Caco-2 (cell line): ENCODE measurements at regions of chr7 and their contacts with region 1.

Region 1: DNA sequence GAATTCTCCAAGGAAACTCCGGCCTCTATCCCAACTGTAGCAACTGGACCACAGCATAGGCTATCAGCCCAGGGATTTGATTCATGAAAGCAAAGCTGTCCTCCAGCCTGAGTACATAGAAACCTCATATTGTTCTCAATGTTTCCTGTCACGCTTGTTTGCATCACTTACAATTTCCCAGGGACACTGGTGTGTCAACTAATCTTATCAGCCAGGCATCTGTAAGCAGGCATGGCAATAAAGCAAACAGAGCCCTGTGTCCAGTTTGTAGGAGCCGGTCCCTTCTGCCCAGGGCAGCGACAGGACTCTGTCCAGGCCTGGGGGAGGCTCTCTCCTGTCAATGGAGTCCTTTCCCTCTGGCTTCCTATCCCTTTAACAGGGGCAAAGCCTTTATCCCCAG is 23.0 kb upstream of the CDHR3 start:
- DNase-seq: peak; percentile 46 to 55
- H3K4me3 ChIP-seq: no peak overlapping the region
- H3K4me3 Mint-ChIP-seq: no peak overlapping the region
- H3K27ac Mint-ChIP-seq: peak overlapping the region; percentile 48
- H3K4me1 ChIP-seq: peaks cover 7% of the 10 kb centered on the region; the same call in 1 of the 2 replicates
- H3K4me1 Mint-ChIP-seq: peaks cover 14% of the 10 kb centered on the region
- H3K27me3 ChIP-seq: no peaks in the 10 kb centered on the region
- H3K27me3 Mint-ChIP-seq: no peaks in the 10 kb centered on the region
- CTCF ChIP-seq: no peak

Region 2: DNA sequence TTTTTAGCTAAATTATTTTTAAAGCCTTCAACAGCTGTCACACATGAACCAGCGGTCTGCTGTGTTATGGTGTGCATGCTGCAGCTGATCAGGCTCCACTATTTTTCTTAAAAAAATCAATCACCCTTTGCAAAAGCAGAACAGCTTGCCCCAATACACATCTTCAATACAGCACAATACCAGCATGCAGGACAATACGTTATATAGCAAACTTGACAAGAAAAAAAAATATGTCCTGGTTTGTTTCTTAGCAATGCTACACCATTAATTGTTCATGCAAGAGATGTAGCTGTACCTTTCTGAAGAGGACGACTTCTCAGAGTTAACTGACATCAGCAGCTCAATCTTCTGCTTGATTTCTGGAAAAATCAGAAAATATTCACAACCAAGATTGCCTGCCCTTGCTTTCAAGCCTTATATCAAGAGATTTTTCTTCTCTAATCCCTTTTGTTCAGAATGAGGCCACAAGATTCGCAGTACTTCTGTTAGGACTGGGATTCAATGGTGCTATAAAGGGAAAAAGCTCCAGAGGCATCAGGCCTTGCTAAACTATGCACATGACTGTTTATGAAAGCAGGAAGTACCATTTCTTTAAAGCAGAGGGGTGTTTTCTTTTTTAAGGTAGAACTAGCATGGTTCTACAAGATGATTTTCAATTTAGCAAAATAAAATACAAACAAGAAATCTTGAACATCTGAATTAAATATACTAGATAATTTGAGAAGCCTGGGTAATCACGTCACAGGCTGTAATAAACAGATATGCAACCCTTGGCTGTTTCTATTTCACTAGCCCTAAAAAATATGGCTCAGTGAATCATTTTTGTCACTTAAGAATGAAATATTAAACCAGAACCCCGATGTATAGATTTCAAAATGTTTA is 671.4 kb before region 1 on chr7:
- CTCF ChIA-PET with region 1: no interaction called
- POLR2A ChIA-PET with region 1: no interaction called
- intact Hi-C with region 1: no loop called
- DNase-seq: peak in 1 of 2 experiments; percentile 7
- H3K4me3 ChIP-seq: peak overlapping the region; percentile 10; the same call in 1 of the 2 replicates
- H3K4me3 Mint-ChIP-seq: peak overlapping the region; percentile 59
- H3K27ac Mint-ChIP-seq: peak overlapping the region; percentile 37
- H3K4me1 ChIP-seq: peaks cover 10% of the 10 kb centered on the region
- H3K4me1 Mint-ChIP-seq: peaks cover 7% of the 10 kb centered on the region
- H3K27me3 ChIP-seq: no peaks in the 10 kb centered on the region
- H3K27me3 Mint-ChIP-seq: no peaks in the 10 kb centered on the region
- CTCF ChIP-seq: no peak

Region 3: GRCh38 chr7:105896407-105896911 is 43.6 kb before region 1 on chr7:
- CTCF ChIA-PET with region 1: no interaction called
- POLR2A ChIA-PET with region 1: no interaction called
- intact Hi-C with region 1: no loop called
- DNase-seq: no peak
- H3K4me3 ChIP-seq: no peak overlapping the region
- H3K4me3 Mint-ChIP-seq: no peak overlapping the region
- H3K27ac Mint-ChIP-seq: no peak overlapping the region
- H3K4me1 ChIP-seq: no peaks in the 10 kb centered on the region; the same call in 1 of the 2 replicates
- H3K4me1 Mint-ChIP-seq: peaks cover 15% of the 10 kb centered on the region
- H3K27me3 ChIP-seq: no peaks in the 10 kb centered on the region
- H3K27me3 Mint-ChIP-seq: no peaks in the 10 kb centered on the region
- CTCF ChIP-seq: no peak

Region 4: GRCh38 chr7:105916603-105917002 is 23.5 kb before region 1 on chr7:
- CTCF ChIA-PET with region 1: no interaction called
- POLR2A ChIA-PET with region 1: no interaction called
- intact Hi-C with region 1: no loop called
- DNase-seq: no peak
- H3K4me3 ChIP-seq: no peak overlapping the region
- H3K4me3 Mint-ChIP-seq: no peak overlapping the region
- H3K27ac Mint-ChIP-seq: no peak overlapping the region
- H3K4me1 ChIP-seq: no peaks in the 10 kb centered on the region
- H3K4me1 Mint-ChIP-seq: no peaks in the 10 kb centered on the region
- H3K27me3 ChIP-seq: no peaks in the 10 kb centered on the region
- H3K27me3 Mint-ChIP-seq: no peaks in the 10 kb centered on the region
- CTCF ChIP-seq: no peak

Region 5: GRCh38 chr7:105975770-105976422 is 35.8 kb after region 1 on chr7:
- CTCF ChIA-PET with region 1: no interaction called
- POLR2A ChIA-PET with region 1: no interaction called
- intact Hi-C with region 1: loop called (anchors 5 kb)
- DNase-seq: no peak
- H3K4me3 ChIP-seq: no peak overlapping the region
- H3K4me3 Mint-ChIP-seq: no peak overlapping the region
- H3K27ac Mint-ChIP-seq: no peak overlapping the region
- H3K4me1 ChIP-seq: no peaks in the 10 kb centered on the region
- H3K4me1 Mint-ChIP-seq: peaks cover 13% of the 10 kb centered on the region
- H3K27me3 ChIP-seq: no peaks in the 10 kb centered on the region
- H3K27me3 Mint-ChIP-seq: no peaks in the 10 kb centered on the region
- CTCF ChIP-seq: no peak